Activated CD4-positive, alpha-beta T cell treated with anti-CD3 and anti-CD28 coated beads, Interleukin-2, amount 10 ng/mL, durations not matched to agents 24 days and 14 days (primary cell): ENCODE measurements at regions of chr5 and their contacts with region 1.

Region 1: GRCh38 chr5:148443998-148444397 is 60.2 kb downstream of the FBXO38 start:
- DNase-seq: peak; percentile 85
- H3K4me3 Mint-ChIP-seq: no peak overlapping the region
- H3K27ac Mint-ChIP-seq: no peak overlapping the region
- H3K4me1 Mint-ChIP-seq: no peaks in the 10 kb centered on the region
- H3K27me3 Mint-ChIP-seq: no peaks in the 10 kb centered on the region

Region 2: GRCh38 chr5:148179234-148179824 is 264.7 kb before region 1 on chr5:
- intact Hi-C with region 1: loop called (anchors 5 kb)
- DNase-seq: peak; percentile 73
- H3K4me3 Mint-ChIP-seq: no peak overlapping the region
- H3K27ac Mint-ChIP-seq: no peak overlapping the region
- H3K4me1 Mint-ChIP-seq: peaks cover 3% of the 10 kb centered on the region
- H3K27me3 Mint-ChIP-seq: peaks cover 15% of the 10 kb centered on the region

Region 3: GRCh38 chr5:148469501-148469935 is 25.5 kb after region 1 on chr5:
- intact Hi-C with region 1: no loop called
- DNase-seq: no peak
- H3K4me3 Mint-ChIP-seq: no peak overlapping the region
- H3K27ac Mint-ChIP-seq: no peak overlapping the region
- H3K4me1 Mint-ChIP-seq: no peaks in the 10 kb centered on the region
- H3K27me3 Mint-ChIP-seq: peaks cover 6% of the 10 kb centered on the region

Region 4: GRCh38 chr5:148482691-148483462 is 38.9 kb after region 1 on chr5:
- intact Hi-C with region 1: loop called (anchors 2 kb)
- DNase-seq: peak; percentile 88
- H3K4me3 Mint-ChIP-seq: no peak overlapping the region
- H3K27ac Mint-ChIP-seq: no peak overlapping the region
- H3K4me1 Mint-ChIP-seq: peaks cover 5% of the 10 kb centered on the region
- H3K27me3 Mint-ChIP-seq: peaks cover 32% of the 10 kb centered on the region

Region 5: GRCh38 chr5:149035372-149035790 is 591.4 kb after region 1 on chr5:
- intact Hi-C with region 1: loop called (anchors 1 kb)
- DNase-seq: peak; percentile 89
- H3K4me3 Mint-ChIP-seq: no peak overlapping the region
- H3K27ac Mint-ChIP-seq: no peak overlapping the region
- H3K4me1 Mint-ChIP-seq: peaks cover 28% of the 10 kb centered on the region
- H3K27me3 Mint-ChIP-seq: peaks cover 3% of the 10 kb centered on the region

Region 6: DNA sequence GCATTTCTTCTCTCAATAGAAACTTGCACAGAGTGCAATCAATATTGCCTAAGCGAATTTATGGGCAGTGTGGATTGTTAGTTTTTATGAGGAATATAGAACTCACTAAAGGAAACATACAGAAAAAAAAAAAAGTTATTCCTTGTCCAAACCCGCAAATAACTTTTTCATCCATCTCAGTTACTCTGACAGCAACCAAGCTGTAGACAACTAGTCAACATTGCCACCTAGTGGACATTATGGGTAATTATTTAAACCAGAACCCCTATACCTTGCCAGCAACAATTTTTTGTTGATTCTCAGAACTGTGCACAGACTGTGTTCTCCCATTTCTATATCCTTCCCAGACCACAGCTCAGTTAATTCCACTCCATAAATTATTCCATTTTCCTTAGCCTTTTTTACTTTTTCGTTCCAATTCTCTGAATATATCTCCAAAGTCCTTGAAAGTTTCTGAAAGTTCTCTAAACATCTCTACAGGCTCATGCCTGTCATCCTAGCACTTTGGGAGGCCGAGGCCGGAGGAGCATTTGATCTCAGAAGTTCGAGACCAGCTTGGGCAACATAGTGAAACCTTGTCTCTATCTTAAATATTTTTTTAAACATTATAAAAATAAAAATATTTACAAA is 825.0 kb after region 1 on chr5:
- intact Hi-C with region 1: loop called (anchors 10 kb)
- DNase-seq: peak; percentile 70
- H3K4me3 Mint-ChIP-seq: no peak overlapping the region
- H3K27ac Mint-ChIP-seq: no peak overlapping the region
- H3K4me1 Mint-ChIP-seq: peaks cover 6% of the 10 kb centered on the region
- H3K27me3 Mint-ChIP-seq: peaks cover 55% of the 10 kb centered on the region